Natural killer cell (primary cell): ENCODE measurements at regions of chr1 and their contacts with region 1.

Region 1: GRCh38 chr1:183471743-183472487 is 384 bp upstream of the SMG7 start:
- DNase-seq: peak; percentile 90 to 98
- ATAC-seq: peak; percentile 68 to 88 (median 74)
- H3K4me3 ChIP-seq: peak overlapping the region; percentile 80
- H3K4me3 Mint-ChIP-seq: peak overlapping the region; percentile 98
- H3K27ac ChIP-seq: peak overlapping the region; percentile 97
- H3K27ac Mint-ChIP-seq: peak overlapping the region; percentile 98 to 99
- H3K4me1 ChIP-seq: peaks cover 16% of the 10 kb centered on the region
- H3K4me1 Mint-ChIP-seq: peaks cover 23 to 35% of the 10 kb centered on the region in 2 donors
- H3K27me3 ChIP-seq: no peaks in the 10 kb centered on the region
- H3K27me3 Mint-ChIP-seq: peaks cover 0 to 7% of the 10 kb centered on the region in 2 donors
- CTCF ChIP-seq: no peak

Region 2: GRCh38 chr1:183514235-183514634 is 42.3 kb after region 1 on chr1:
- intact Hi-C with region 1: loop called (anchors 5 kb)
- DNase-seq: no peak
- ATAC-seq: no peak
- H3K4me3 ChIP-seq: no peak overlapping the region
- H3K4me3 Mint-ChIP-seq: no peak overlapping the region
- H3K27ac ChIP-seq: no peak overlapping the region
- H3K27ac Mint-ChIP-seq: no peak overlapping the region
- H3K4me1 ChIP-seq: no peaks in the 10 kb centered on the region
- H3K4me1 Mint-ChIP-seq: peaks cover 14 to 31% of the 10 kb centered on the region in 2 donors
- H3K27me3 ChIP-seq: no peaks in the 10 kb centered on the region
- H3K27me3 Mint-ChIP-seq: no peaks in the 10 kb centered on the region
- CTCF ChIP-seq: no peak

Region 3: GRCh38 chr1:183543619-183544204 is 71.8 kb after region 1 on chr1:
- intact Hi-C with region 1: loop called (anchors 1 kb)
- DNase-seq: peak in 1 of 2 donors; percentile 71
- ATAC-seq: peak; percentile 78 to 92 (median 90)
- H3K4me3 ChIP-seq: no peak overlapping the region
- H3K4me3 Mint-ChIP-seq: no peak overlapping the region
- H3K27ac ChIP-seq: no peak overlapping the region
- H3K27ac Mint-ChIP-seq: peak overlapping the region; percentile 4 to 41
- H3K4me1 ChIP-seq: no peaks in the 10 kb centered on the region
- H3K4me1 Mint-ChIP-seq: peaks cover 5% of the 10 kb centered on the region in 2 donors
- H3K27me3 ChIP-seq: no peaks in the 10 kb centered on the region
- H3K27me3 Mint-ChIP-seq: no peaks in the 10 kb centered on the region
- CTCF ChIP-seq: peak; percentile 54

Region 4: GRCh38 chr1:183635606-183636333 is 163.9 kb after region 1 on chr1 and contains the start of gene ARPC5:
- intact Hi-C with region 1: loop called (anchors 2 kb)
- DNase-seq: peak; percentile 89 to 98
- ATAC-seq: peak; percentile 83 to 93 (median 86)
- H3K4me3 ChIP-seq: peak within 1 kb of the TSS; percentile 62
- H3K4me3 Mint-ChIP-seq: peak within 1 kb of the TSS; percentile 99
- H3K27ac ChIP-seq: peak within 1 kb of the TSS; percentile 49
- H3K27ac Mint-ChIP-seq: peak within 1 kb of the TSS; percentile 92 to 99
- H3K4me1 ChIP-seq: peaks cover 16% of the 10 kb centered on the region
- H3K4me1 Mint-ChIP-seq: peaks cover 40 to 47% of the 10 kb centered on the region in 2 donors
- H3K27me3 ChIP-seq: no peaks in the 10 kb centered on the region
- H3K27me3 Mint-ChIP-seq: peaks cover 0 to 7% of the 10 kb centered on the region in 2 donors
- CTCF ChIP-seq: no peak
- total RNA-seq, gene ARPC5: 103 to 120 (median 113) TPM